ENCODE measurements at regions of chr2 and their contacts with region 1.

Region 1: DNA sequence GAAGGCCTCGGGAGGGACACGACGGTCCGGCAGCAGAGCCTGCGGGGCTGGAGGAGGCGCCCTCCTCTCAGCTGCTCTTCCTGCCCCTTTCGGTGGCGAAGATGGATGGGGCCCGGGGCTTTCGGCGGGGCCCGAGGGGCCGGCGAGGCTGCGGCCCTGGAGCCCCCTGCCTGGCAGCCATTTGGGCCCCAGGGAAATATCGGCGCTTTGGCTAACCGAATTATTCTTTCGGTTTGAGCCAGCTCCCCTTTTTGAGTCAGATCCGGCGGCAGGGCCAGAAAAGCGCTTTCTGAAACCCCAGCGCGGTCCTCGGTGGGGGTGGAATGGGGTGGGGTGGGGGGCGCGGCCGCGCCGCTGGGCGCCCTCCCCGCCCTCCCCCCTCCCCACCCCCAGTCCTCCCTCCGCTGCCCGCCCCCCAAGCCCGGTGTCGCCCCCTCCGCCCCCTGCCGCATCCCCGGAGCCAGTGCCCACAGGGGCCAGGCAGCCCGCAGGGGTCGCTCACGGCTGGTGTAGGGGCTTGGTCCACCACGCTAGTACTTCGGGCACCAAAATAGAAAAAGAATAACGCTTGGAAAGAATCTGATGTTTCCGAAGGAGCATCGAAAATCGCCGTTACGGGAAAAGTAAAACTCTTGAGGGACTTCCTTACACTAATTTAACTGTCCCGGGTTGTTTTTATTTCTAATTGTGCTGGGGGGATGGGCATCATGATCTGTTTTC is 9.1 kb upstream of the ARID5A start:
- DNase-seq: peak; percentile 87
- H3K4me3 Mint-ChIP-seq: peak overlapping the region; percentile 78
- H3K27ac Mint-ChIP-seq: peak overlapping the region; percentile 99
- H3K4me1 Mint-ChIP-seq: peaks cover 61% of the 10 kb centered on the region
- H3K27me3 Mint-ChIP-seq: no peaks in the 10 kb centered on the region

Region 2: DNA sequence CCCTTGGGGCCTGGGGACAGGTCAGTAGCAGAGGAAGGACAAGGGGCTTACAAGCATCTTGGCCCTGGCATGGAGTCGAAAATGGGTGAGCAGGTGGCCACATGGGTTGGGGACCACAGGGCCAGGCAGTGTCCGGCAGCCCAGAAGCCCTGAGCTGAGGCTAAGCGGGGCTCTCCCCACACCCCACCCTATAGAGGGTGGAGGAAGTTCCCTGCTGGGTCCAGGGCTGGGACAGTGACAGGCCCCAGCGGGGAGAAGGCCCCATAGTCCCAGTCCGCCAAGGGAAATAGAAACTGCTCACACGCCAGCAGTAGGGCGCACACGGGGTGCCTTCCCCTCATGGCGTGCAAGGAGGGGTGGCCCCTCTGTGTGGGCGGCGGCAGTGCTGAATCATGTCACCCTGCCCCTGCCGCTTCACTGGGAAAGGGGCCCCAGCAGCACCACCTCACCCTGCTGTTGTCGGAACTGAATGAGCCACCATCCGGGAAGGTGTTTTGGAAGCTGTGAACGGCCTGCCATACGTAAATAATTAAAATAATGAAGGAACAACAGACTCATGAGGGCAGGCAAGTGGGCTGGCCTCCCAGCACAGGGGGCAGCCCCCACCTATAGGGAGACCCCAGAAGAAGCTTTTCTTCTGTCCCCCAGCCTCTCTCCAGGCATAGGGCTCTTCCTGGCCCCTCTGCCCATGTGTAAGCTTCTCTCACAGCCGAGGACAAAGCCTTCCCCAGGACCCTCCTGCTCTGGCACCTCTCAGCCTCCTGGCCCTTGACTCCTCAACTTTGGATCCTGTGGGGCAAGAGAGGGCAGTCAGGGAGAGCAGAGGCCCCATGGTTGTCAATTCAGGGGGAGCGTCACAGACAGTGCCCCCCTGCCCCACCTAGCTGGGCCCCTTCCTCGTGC is 369.5 kb before region 1 on chr2:
- CTCF ChIA-PET with region 1: no interaction called
- intact Hi-C with region 1: loop called (anchors 1 kb)
- DNase-seq: peak; percentile 99
- H3K4me3 Mint-ChIP-seq: peak overlapping the region; percentile 75
- H3K27ac Mint-ChIP-seq: peak overlapping the region; percentile 95
- H3K4me1 Mint-ChIP-seq: peaks cover 85% of the 10 kb centered on the region
- H3K27me3 Mint-ChIP-seq: no peaks in the 10 kb centered on the region

Region 3: DNA sequence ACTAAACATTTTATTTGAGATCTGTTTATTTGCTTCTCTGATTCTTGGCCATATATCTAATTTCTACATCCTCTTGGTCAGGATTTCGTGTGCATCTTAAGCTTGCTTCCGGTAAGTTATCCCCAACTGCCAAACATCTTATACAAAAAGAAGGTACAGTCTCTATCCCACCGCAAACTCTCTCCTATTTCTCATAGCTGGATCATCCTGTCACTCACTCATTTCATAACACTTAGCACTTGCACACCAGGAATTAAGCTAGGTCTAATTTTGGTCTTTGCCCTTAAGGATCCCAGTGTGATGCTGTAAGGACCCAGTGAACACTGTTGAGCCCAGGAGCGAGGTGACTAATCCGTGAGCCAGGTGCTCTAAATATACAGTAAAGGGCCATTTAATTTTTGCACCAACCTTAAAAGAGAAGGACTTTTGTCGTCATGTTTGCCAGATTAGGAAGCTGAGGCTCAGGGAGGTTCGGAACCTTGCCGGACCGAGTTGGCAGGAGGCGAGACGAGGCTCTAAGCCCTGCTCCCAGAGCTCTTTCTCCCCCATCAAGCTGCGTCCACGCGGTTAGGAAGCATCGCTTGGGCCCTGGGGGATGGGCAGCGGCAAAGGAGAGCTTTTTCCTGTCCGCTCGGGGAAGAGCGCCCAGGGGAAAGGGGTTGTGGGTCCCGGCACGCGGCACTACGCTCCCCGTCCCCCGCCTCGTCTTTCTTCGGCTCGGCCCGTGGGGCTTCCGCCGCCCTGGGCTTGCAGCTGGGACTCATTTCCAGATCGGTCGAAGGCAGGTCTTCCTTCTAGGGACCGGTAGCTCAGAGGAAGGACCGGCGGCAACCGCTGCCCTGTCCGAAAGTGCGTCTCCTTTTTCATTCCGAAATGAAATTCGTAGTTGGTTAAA is 206.5 kb before region 1 on chr2:
- CTCF ChIA-PET with region 1: interaction called, 3 read pairs
- intact Hi-C with region 1: loop called (anchors 5 kb)
- DNase-seq: peak; percentile 36
- H3K4me3 Mint-ChIP-seq: peak overlapping the region; percentile 88
- H3K27ac Mint-ChIP-seq: peak overlapping the region; percentile 39
- H3K4me1 Mint-ChIP-seq: peaks cover 41% of the 10 kb centered on the region
- H3K27me3 Mint-ChIP-seq: peaks cover 2% of the 10 kb centered on the region

Region 4: GRCh38 chr2:96342085-96342484 is 185.4 kb before region 1 on chr2:
- CTCF ChIA-PET with region 1: no interaction called
- intact Hi-C with region 1: loop called (anchors 1 kb)
- DNase-seq: peak; percentile 44
- H3K4me3 Mint-ChIP-seq: no peak overlapping the region
- H3K27ac Mint-ChIP-seq: no peak overlapping the region
- H3K4me1 Mint-ChIP-seq: peaks cover 38% of the 10 kb centered on the region
- H3K27me3 Mint-ChIP-seq: no peaks in the 10 kb centered on the region

Region 5: GRCh38 chr2:96500385-96501066 is 26.9 kb before region 1 on chr2:
- CTCF ChIA-PET with region 1: no interaction called
- intact Hi-C with region 1: no loop called
- DNase-seq: no peak
- H3K4me3 Mint-ChIP-seq: no peak overlapping the region
- H3K27ac Mint-ChIP-seq: no peak overlapping the region
- H3K4me1 Mint-ChIP-seq: peaks cover 23% of the 10 kb centered on the region
- H3K27me3 Mint-ChIP-seq: no peaks in the 10 kb centered on the region

Region 6: GRCh38 chr2:96554293-96555145 is 27.1 kb after region 1 on chr2:
- CTCF ChIA-PET with region 1: interaction called, 18 read pairs
- intact Hi-C with region 1: loop called (anchors 1 kb)
- DNase-seq: peak; percentile 73
- H3K4me3 Mint-ChIP-seq: peak overlapping the region; percentile 52
- H3K27ac Mint-ChIP-seq: peak overlapping the region; percentile 88
- H3K4me1 Mint-ChIP-seq: peaks cover 34% of the 10 kb centered on the region
- H3K27me3 Mint-ChIP-seq: no peaks in the 10 kb centered on the region

Measured in activated naive CD4-positive, alpha-beta T cell treated with anti-CD3 and anti-CD28 coated beads for 36 hours (primary cell).